Posterior vena cava (tissue), 2 donors: ENCODE measurements at regions of chr10 and their contacts with region 1.

Region 1: DNA sequence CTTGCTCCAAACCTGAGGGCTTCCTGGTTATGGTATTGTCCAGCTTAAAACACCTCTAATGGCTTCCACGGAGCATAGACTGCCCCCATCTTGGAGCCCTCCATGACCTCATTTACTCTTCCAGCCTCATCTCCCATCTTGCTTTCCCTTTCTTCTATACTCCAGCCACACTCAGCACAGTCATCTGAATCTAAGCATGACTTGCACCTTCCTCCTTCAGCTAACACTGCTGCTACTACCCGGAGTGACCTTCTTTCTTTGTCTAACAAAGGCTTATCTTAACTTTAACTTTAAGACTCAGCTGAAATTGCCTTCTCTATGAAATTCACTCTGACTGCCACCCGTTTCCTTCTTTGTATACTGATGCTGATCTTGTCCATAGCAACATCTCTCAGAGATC is 135.1 kb downstream of the FAM107B start:
- DNase-seq: no peak

Region 2: DNA sequence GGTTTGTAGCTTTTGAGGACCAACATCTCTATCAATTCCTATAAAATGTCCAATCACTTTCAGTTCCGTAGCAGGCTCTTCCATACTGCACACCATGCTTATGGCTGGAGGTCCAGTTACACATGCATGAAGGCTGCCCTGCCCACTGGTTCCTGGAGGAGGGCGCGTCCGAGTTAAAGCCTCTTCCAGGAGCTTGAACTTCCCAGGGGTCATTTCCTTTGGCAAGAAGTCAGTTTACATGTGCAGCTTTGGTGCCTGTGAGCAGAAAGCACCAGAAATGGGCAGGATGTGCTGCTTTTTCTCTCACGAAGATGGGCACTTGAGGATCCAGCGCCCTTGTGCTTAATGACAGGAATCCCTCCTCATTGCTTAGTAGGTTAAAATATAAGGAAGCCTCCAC is 1322.2 kb before region 1 on chr10:
- intact Hi-C with region 1: no loop called
- DNase-seq: no peak

Region 3: DNA sequence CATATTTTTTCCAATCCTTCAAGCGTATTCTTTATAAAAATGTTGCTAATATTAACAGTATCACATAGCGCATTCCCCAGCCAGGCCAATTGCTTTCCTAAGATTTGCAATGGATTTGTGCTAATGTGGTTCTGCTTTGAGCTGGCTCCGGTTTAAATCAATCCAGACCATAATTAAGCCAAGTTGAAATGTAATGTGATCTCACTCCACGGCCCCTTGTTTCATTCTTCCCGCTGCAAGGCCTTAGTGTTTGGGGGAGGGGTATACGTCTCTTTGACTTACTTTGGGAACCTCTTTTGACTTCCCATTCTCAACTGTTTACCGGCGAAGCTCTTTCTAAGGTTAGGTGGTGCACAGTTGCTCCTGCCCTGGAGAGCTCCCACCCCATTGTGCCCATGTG is 966.5 kb before region 1 on chr10:
- intact Hi-C with region 1: no loop called
- DNase-seq: no peak

Region 4: GRCh38 chr10:14604181-14605142 is 35.2 kb before region 1 on chr10:
- intact Hi-C with region 1: loop called in 1 of 2 experiments (anchors 5 kb)
- DNase-seq: peak; percentile 95